ENCODE measurements at regions of chr7 and their contacts with region 1.

Region 1: DNA sequence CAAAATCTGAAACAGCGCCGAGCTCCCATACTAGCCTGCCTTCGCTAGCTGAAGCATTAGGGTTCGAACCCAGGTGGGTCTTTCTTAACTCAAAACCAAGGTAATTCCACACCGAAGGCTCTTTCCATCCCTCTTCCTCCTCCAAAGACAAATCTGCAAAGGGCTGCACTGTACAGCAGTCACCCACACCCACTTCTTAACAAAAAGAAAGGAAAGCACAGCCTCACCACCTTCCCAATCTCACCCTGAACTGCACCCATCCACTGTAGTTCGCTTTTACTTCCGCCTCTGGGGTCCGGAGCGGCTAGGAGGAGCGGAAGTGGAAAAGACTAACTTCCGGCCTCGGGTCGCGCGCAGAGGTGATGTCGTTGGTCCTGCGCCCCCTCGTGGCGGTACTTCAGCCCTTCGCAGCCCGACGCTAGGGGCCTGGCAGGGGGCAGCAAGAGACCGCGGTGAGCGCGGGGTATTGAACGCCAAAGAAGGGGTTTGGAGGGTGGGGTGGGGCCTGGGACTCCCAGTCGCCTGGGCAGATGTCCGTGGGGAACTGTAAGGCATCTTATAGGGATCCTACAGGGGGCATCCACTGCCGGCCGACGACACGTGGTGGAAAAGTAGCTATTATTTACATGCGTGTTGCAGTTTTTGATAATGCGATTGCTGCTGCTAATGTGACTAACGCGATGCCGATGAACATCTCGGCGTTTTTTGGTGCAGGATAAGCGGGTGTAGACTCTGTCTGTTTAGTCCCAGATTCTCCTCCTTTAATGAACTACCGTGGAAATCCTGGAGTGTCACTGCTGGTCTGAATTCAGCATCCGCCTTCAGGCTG is at the start of gene MTERF1:
- DNase-seq: peak; percentile 69
- ATAC-seq: peak; percentile 99
- H3K4me3 ChIP-seq: peak within 1 kb of the TSS; percentile 89
- H3K27ac ChIP-seq: peak within 1 kb of the TSS; percentile 88
- H3K4me1 ChIP-seq: peaks cover 9% of the 10 kb centered on the region
- H3K27me3 ChIP-seq: no peaks in the 10 kb centered on the region
- CTCF ChIP-seq: peak; percentile 97 to 100 (median 99); a peak in 5 of 6 replicates
- EP300 ChIP-seq: no peak
- POLR2A ChIP-seq: peak; percentile 95
- RAD21 ChIP-seq: peak; percentile 80
- polyA plus RNA-seq, gene MTERF1: 30.7 to 38.7 TPM

Region 2: DNA sequence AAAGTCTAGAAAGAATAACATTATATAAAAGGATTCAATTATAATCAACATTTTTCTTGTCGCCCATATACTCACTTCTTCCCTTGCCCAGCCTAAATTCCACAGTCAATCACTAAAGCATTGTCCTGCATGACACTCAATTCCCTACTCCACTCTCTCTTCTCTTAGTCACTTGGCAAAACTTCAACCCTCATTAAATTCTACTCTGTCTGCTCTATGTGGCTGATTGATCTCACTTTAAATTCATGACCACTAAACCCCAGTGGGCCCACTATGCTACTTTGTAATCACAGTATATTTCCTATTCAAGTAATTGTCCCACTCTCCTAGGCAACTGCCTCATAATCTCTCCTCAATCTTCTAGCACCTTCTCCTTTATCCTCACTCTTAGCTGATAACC is 54.2 kb before region 1 on chr7:
- CTCF ChIA-PET with region 1: interaction called, 29 read pairs
- POLR2A ChIA-PET with region 1: no interaction called
- RAD21 ChIA-PET with region 1: interaction called, 11 read pairs
- SMC1A ChIA-PET with region 1: interaction called, 13 read pairs
- in situ Hi-C with region 1: no loop called
- intact Hi-C with region 1: no loop called
- DNase-seq: no peak
- ATAC-seq: no peak
- H3K4me3 ChIP-seq: no peak overlapping the region
- H3K27ac ChIP-seq: no peak overlapping the region
- H3K4me1 ChIP-seq: no peaks in the 10 kb centered on the region
- H3K27me3 ChIP-seq: no peaks in the 10 kb centered on the region; a peak in 1 of 4 replicates
- CTCF ChIP-seq: no peak
- EP300 ChIP-seq: no peak
- POLR2A ChIP-seq: no peak
- RAD21 ChIP-seq: no peak

Region 3: GRCh38 chr7:91835846-91836368 is 44.7 kb before region 1 on chr7:
- CTCF ChIA-PET with region 1: interaction called, 6 read pairs
- POLR2A ChIA-PET with region 1: no interaction called
- RAD21 ChIA-PET with region 1: interaction called, 7 read pairs
- SMC1A ChIA-PET with region 1: interaction called, 13 read pairs
- in situ Hi-C with region 1: no loop called
- intact Hi-C with region 1: no loop called
- DNase-seq: no peak
- ATAC-seq: no peak
- H3K4me3 ChIP-seq: no peak overlapping the region
- H3K27ac ChIP-seq: no peak overlapping the region
- H3K4me1 ChIP-seq: no peaks in the 10 kb centered on the region
- H3K27me3 ChIP-seq: no peaks in the 10 kb centered on the region
- CTCF ChIP-seq: no peak
- EP300 ChIP-seq: no peak
- POLR2A ChIP-seq: no peak
- RAD21 ChIP-seq: no peak

Region 4: GRCh38 chr7:91869661-91870060 is 11.0 kb before region 1 on chr7:
- CTCF ChIA-PET with region 1: interaction called, 24 read pairs
- POLR2A ChIA-PET with region 1: interaction called, 5 read pairs
- RAD21 ChIA-PET with region 1: interaction called, 3 read pairs
- SMC1A ChIA-PET with region 1: interaction called, 10 read pairs
- in situ Hi-C with region 1: no loop called
- intact Hi-C with region 1: no loop called
- DNase-seq: no peak
- ATAC-seq: no peak
- H3K4me3 ChIP-seq: no peak overlapping the region
- H3K27ac ChIP-seq: no peak overlapping the region
- H3K4me1 ChIP-seq: no peaks in the 10 kb centered on the region
- H3K27me3 ChIP-seq: no peaks in the 10 kb centered on the region
- CTCF ChIP-seq: no peak; a peak in 1 of 6 replicates
- EP300 ChIP-seq: no peak
- POLR2A ChIP-seq: no peak
- RAD21 ChIP-seq: no peak

Region 5: GRCh38 chr7:91929463-91929862 is 48.8 kb after region 1 on chr7:
- CTCF ChIA-PET with region 1: no interaction called
- POLR2A ChIA-PET with region 1: no interaction called
- RAD21 ChIA-PET with region 1: no interaction called
- SMC1A ChIA-PET with region 1: no interaction called
- in situ Hi-C with region 1: no loop called
- intact Hi-C with region 1: no loop called
- DNase-seq: no peak
- ATAC-seq: peak; percentile 89
- H3K4me3 ChIP-seq: no peak overlapping the region
- H3K27ac ChIP-seq: no peak overlapping the region
- H3K4me1 ChIP-seq: no peaks in the 10 kb centered on the region
- H3K27me3 ChIP-seq: no peaks in the 10 kb centered on the region
- CTCF ChIP-seq: no peak
- EP300 ChIP-seq: no peak
- POLR2A ChIP-seq: no peak
- RAD21 ChIP-seq: no peak

Region 6: GRCh38 chr7:91940572-91941341 is 60.1 kb after region 1 on chr7 and contains the start of gene AKAP9:
- CTCF ChIA-PET with region 1: interaction called, 11 read pairs
- POLR2A ChIA-PET with region 1: interaction called, 6 read pairs
- RAD21 ChIA-PET with region 1: interaction called, 16 read pairs
- SMC1A ChIA-PET with region 1: interaction called, 10 read pairs
- in situ Hi-C with region 1: no loop called
- intact Hi-C with region 1: loop called (anchors 2 kb)
- DNase-seq: peak; percentile 44
- ATAC-seq: peak; percentile 96
- H3K4me3 ChIP-seq: peak within 1 kb of the TSS; percentile 98
- H3K27ac ChIP-seq: peak within 1 kb of the TSS; percentile 84
- H3K4me1 ChIP-seq: peaks cover 5% of the 10 kb centered on the region; the same call in 1 of the 2 replicates
- H3K27me3 ChIP-seq: no peaks in the 10 kb centered on the region
- CTCF ChIP-seq: no peak
- EP300 ChIP-seq: no peak
- POLR2A ChIP-seq: peak; percentile 88; the same call in 1 of the 2 replicates
- RAD21 ChIP-seq: no peak
- polyA plus RNA-seq, gene AKAP9: 21.1 to 42.8 TPM

Region 7: DNA sequence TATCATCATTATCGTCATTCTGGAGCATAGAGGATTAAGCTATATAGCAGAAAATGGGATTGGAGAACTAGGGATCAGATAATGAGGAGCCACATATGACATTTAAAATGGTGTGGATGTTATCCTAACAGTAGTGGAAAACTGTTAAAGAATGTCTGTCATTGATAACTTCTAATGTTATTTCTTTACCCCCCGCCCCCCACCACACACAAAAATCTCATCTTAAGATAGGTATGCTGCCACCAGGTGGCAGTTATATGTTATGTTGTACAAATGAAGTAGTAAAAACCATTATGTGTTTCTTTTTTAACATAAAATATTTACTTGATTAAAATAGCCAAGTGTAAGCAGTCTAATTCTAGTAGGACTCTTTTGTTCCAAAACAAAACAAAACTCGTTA is 73.0 kb after region 1 on chr7:
- CTCF ChIA-PET with region 1: interaction called, 12 read pairs
- POLR2A ChIA-PET with region 1: no interaction called
- RAD21 ChIA-PET with region 1: no interaction called
- SMC1A ChIA-PET with region 1: interaction called, 7 read pairs
- in situ Hi-C with region 1: no loop called
- intact Hi-C with region 1: no loop called
- DNase-seq: no peak
- ATAC-seq: 0 out of 3 replicates have a peak, but pooled peaks have one; percentile 25
- H3K4me3 ChIP-seq: no peak overlapping the region
- H3K27ac ChIP-seq: no peak overlapping the region
- H3K4me1 ChIP-seq: peaks cover 4% of the 10 kb centered on the region
- H3K27me3 ChIP-seq: no peaks in the 10 kb centered on the region
- CTCF ChIP-seq: peak in 2 of 3 experiments; percentile 21 to 28; a peak in 2 of 6 replicates
- EP300 ChIP-seq: no peak
- POLR2A ChIP-seq: no peak
- RAD21 ChIP-seq: no peak

Region 8: DNA sequence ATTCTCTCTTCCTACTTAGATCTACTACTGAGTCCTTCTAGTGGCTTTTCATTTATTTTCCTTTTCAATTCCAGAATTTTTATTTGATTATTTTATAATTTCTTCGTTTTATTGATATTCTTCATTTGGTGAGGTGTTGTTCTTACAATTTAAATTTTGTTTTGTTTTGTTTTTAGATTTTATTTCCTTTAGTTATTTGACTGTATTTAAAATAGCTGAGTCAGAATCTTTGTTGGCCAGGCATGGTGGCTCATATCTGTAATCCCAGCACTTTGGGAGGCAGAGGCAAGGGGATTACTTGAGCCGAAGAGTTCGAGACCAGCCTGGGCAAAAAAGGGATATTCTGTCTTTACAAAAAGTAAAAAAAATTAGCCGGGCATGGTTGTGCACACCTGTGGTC is 96.1 kb after region 1 on chr7:
- CTCF ChIA-PET with region 1: no interaction called
- POLR2A ChIA-PET with region 1: no interaction called
- RAD21 ChIA-PET with region 1: no interaction called
- SMC1A ChIA-PET with region 1: no interaction called
- in situ Hi-C with region 1: no loop called
- intact Hi-C with region 1: no loop called
- DNase-seq: no peak
- ATAC-seq: no peak
- H3K4me3 ChIP-seq: no peak overlapping the region
- H3K27ac ChIP-seq: no peak overlapping the region
- H3K4me1 ChIP-seq: no peaks in the 10 kb centered on the region
- H3K27me3 ChIP-seq: no peaks in the 10 kb centered on the region
- CTCF ChIP-seq: no peak
- EP300 ChIP-seq: no peak
- POLR2A ChIP-seq: no peak
- RAD21 ChIP-seq: no peak

Region 9: DNA sequence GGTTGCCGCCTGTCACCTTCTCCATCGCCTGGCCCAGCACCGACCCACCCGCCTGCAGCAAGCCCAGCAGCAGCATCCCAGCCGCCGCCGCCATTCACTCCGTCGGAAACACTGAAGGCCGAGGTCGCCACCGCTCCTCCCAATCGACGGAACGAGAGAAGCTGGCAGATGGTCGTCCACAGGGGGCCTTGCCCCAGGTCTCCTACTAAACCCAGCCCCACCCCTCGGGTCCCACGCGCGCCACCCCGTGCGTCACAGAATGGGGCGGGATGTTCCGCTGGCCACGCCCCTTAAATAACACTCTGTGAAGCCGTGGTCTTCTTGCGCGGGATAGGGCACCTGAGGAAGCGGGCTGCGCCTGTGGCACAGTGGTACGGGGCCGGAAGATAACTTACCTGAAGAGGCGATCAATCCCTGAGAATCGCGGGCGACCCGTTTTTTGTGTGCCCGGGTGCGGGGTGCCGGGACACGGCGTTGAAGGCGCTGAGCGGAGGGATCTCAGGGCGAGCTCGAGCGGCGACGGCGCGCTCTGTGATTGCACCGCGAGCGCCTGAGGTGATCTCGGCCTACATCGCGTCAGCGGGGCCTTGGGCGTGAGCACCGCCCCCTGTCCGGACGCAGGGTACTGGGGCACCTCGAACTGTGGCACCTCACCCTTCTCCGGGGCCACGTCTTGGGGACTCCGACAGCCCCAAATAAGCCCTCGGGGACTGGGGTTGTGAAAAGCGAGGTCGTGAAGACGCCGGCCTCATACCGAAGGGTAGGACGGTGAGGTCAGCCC is 253.8 kb after region 1 on chr7 and contains the start of gene CYP51A1:
- CTCF ChIA-PET with region 1: interaction called, 4 read pairs
- POLR2A ChIA-PET with region 1: no interaction called
- RAD21 ChIA-PET with region 1: no interaction called
- SMC1A ChIA-PET with region 1: no interaction called
- in situ Hi-C with region 1: no loop called
- intact Hi-C with region 1: loop called (anchors 5 kb)
- DNase-seq: peak; percentile 76
- ATAC-seq: peak; percentile 90
- H3K4me3 ChIP-seq: peak within 1 kb of the TSS; percentile 79
- H3K27ac ChIP-seq: peak within 1 kb of the TSS; percentile 99
- H3K4me1 ChIP-seq: peaks cover 3% of the 10 kb centered on the region; the same call in 1 of the 2 replicates
- H3K27me3 ChIP-seq: no peaks in the 10 kb centered on the region
- CTCF ChIP-seq: no peak; a peak in 1 of 6 replicates
- EP300 ChIP-seq: 0 out of 4 replicates have a peak, but pooled peaks of 1 of the 2 experiments have one; percentile 37
- POLR2A ChIP-seq: peak; percentile 87
- RAD21 ChIP-seq: no peak
- polyA plus RNA-seq, gene CYP51A1: 28.1 to 33.1 TPM